ENCODE measurements at regions of chr11 and their contacts with region 1.

Region 1: GRCh38 chr11:46537537-46538295 is 56.1 kb downstream of the AMBRA1 start:
- DNase-seq: peak in 8 of 9 donors; percentile 33 to 75 (median 66)
- ATAC-seq: peak; percentile 88
- H3K4me3 ChIP-seq: no peak overlapping the region
- H3K4me3 Mint-ChIP-seq: no peak overlapping the region
- H3K27ac ChIP-seq: no peak overlapping the region
- H3K27ac Mint-ChIP-seq: peak overlapping the region in 4 of 9 donors; percentile 2 to 38 (median 16)
- H3K4me1 ChIP-seq: peaks cover 0 to 3% of the 10 kb centered on the region in 2 donors
- H3K4me1 Mint-ChIP-seq: peaks cover 14 to 58% (median 39%) of the 10 kb centered on the region in 7 donors
- H3K27me3 ChIP-seq: no peaks in the 10 kb centered on the region
- H3K27me3 Mint-ChIP-seq: no peaks in the 10 kb centered on the region

Region 2: DNA sequence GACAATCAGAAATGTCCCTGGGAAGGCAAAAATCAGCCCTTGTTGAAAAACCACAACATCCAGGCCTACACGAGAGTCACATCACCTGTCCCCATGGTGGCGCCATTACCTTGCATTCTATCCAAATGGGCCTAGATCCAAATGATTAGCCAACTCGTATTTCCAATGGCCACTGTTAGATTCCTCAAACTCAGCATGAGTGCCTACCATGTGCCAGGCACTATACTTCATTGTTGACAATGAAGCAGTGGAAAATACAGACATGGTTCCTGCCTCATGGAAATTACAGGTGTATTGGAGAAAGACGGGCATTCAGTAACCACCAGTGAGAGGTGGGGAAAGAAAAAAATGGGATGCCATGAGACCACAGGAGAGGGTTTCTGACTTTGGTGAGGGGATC is 290.1 kb before region 1 on chr11:
- CTCF ChIA-PET with region 1: no interaction called
- POLR2A ChIA-PET with region 1: no interaction called
- intact Hi-C with region 1: no loop called
- DNase-seq: peak in 5 of 9 donors; percentile 22 to 48 (median 43)
- ATAC-seq: no peak
- H3K4me3 ChIP-seq: no peak overlapping the region
- H3K4me3 Mint-ChIP-seq: no peak overlapping the region
- H3K27ac ChIP-seq: no peak overlapping the region
- H3K27ac Mint-ChIP-seq: no peak overlapping the region
- H3K4me1 ChIP-seq: peaks cover 0 to 5% of the 10 kb centered on the region in 2 donors
- H3K4me1 Mint-ChIP-seq: peaks cover 0 to 17% (median 9%) of the 10 kb centered on the region in 7 donors
- H3K27me3 ChIP-seq: no peaks in the 10 kb centered on the region
- H3K27me3 Mint-ChIP-seq: peaks cover 0 to 11% (median 0%) of the 10 kb centered on the region in 5 donors

Region 3: DNA sequence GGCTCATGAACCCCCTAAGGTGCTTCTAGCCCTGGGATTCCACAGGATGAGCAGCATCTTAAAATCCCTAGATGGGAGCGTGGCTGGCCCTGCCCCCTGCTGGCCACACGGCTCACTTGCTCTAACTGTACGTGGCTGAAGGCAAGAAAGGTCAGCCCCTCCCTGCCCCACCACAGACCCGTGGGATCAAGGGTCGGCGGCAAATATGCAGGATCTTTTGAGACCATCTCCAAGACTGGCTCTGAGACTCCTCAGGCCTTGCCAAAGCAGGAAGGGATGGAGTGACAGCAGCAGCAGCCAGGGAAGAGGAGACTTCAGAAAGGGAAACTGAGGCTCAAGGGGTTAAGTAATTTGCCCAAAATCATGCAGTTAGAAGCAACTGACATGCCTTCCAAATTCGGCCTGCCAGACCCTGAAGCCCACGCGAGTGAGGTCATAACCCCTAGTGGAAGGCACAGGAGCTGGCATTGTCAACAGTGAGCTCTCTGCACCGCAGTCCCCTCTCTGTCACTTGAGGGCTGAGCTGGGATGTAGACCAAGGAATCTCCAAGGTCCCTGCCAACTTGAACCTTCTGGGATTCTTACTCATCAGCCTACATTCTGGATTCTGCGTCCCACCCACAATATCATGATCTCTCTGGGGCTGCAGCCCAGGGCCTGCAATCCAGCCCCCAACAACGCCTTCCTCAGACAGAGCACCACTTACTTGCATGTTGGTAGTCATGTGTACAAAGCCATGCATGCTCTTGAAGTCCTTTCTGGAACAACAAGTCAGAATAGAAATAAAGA is 228.9 kb before region 1 on chr11:
- CTCF ChIA-PET with region 1: no interaction called
- POLR2A ChIA-PET with region 1: no interaction called
- intact Hi-C with region 1: loop called in 1 of 2 experiments (anchors 5 kb)
- DNase-seq: peak; percentile 29 to 66 (median 53)
- ATAC-seq: peak; percentile 78
- H3K4me3 ChIP-seq: no peak overlapping the region
- H3K4me3 Mint-ChIP-seq: peak overlapping the region in 2 of 10 donors; percentile 53 to 56
- H3K27ac ChIP-seq: no peak overlapping the region
- H3K27ac Mint-ChIP-seq: peak overlapping the region in 3 of 9 donors; percentile 38 to 56 (median 44)
- H3K4me1 ChIP-seq: peaks cover 0 to 5% of the 10 kb centered on the region in 2 donors
- H3K4me1 Mint-ChIP-seq: peaks cover 10 to 23% (median 19%) of the 10 kb centered on the region in 7 donors
- H3K27me3 ChIP-seq: no peaks in the 10 kb centered on the region
- H3K27me3 Mint-ChIP-seq: peaks cover 0 to 3% (median 0%) of the 10 kb centered on the region in 5 donors

Region 4: DNA sequence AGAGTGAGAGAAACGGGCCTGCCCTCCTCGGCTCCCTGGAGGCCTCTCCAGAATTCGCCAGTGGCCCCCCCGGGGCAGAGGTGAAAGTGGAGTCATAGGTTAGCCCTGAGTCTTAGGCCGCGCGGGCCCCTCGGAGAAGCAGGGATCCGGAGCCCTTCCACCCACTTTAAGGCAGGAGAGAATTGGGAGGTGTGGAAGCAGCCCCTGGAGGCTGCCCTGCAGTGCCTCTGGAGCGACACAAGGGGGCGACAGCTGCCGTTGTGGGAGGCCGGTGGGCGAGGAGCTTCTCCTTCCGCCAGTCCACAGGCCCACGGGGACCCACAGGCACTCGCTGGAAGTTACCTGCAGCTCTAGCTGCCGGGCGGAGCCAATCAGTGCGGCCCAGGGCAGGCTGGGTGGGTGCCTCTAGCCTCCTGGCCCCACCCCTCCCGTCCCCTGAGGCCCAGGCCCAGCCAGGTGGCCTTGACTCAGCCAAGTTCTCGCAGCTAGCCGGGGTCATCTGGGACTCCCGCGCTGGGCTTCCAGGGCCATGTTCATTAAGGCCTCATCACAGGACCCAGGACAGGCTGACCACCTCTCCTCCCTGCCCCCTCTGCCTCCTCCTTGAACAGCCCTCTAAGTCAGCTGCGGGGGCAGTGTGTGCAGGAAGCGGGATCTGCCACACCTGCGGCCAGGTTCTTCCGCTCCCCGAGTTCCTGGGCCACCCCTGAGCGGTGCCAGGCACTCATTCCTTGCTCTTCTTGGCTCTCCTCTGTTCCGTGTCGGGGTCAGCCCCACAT is 185.5 kb before region 1 on chr11:
- CTCF ChIA-PET with region 1: no interaction called
- POLR2A ChIA-PET with region 1: no interaction called
- intact Hi-C with region 1: loop called (anchors 2 to 5 kb)
- DNase-seq: peak; percentile 66 to 83 (median 77)
- ATAC-seq: peak; percentile 68
- H3K4me3 ChIP-seq: peak overlapping the region; percentile 59
- H3K4me3 Mint-ChIP-seq: peak overlapping the region; percentile 81 to 97 (median 86)
- H3K27ac ChIP-seq: peak overlapping the region; percentile 74
- H3K27ac Mint-ChIP-seq: peak overlapping the region; percentile 66 to 97 (median 91)
- H3K4me1 ChIP-seq: peaks cover 60 to 69% of the 10 kb centered on the region in 2 donors
- H3K4me1 Mint-ChIP-seq: peaks cover 59 to 82% (median 72%) of the 10 kb centered on the region in 7 donors
- H3K27me3 ChIP-seq: no peaks in the 10 kb centered on the region
- H3K27me3 Mint-ChIP-seq: no peaks in the 10 kb centered on the region

Region 5: GRCh38 chr11:46392421-46393230 is 145.1 kb before region 1 on chr11:
- CTCF ChIA-PET with region 1: no interaction called
- POLR2A ChIA-PET with region 1: no interaction called
- intact Hi-C with region 1: loop called in 1 of 2 experiments (anchors 1 kb)
- DNase-seq: peak; percentile 63 to 91 (median 75)
- ATAC-seq: peak; percentile 90
- H3K4me3 ChIP-seq: peak overlapping the region; percentile 35
- H3K4me3 Mint-ChIP-seq: peak overlapping the region; percentile 70 to 84 (median 78)
- H3K27ac ChIP-seq: no peak overlapping the region
- H3K27ac Mint-ChIP-seq: peak overlapping the region in 3 of 9 donors; percentile 54 to 81 (median 73)
- H3K4me1 ChIP-seq: peaks cover 14 to 21% of the 10 kb centered on the region in 2 donors
- H3K4me1 Mint-ChIP-seq: peaks cover 7 to 35% (median 25%) of the 10 kb centered on the region in 7 donors
- H3K27me3 ChIP-seq: peaks cover 0 to 21% of the 10 kb centered on the region in 2 donors
- H3K27me3 Mint-ChIP-seq: peaks cover 26 to 45% (median 36%) of the 10 kb centered on the region in 5 donors